KBM-7 (cell line): ENCODE measurements at regions of chr20 and their contacts with region 1.

Region 1: GRCh38 chr20:38658879-38659596 is 57.4 kb downstream of the ARHGAP40 start:
- DNase-seq: peak; percentile 25

Region 2: GRCh38 chr20:38304845-38305447 is 354.1 kb before region 1 on chr20:
- in situ Hi-C with region 1: no loop called
- DNase-seq: peak; percentile 73

Region 3: GRCh38 chr20:38825901-38826625 is 167.0 kb after region 1 on chr20:
- in situ Hi-C with region 1: no loop called
- DNase-seq: peak; percentile 64

Region 4: GRCh38 chr20:38907918-38908677 is 249.1 kb after region 1 on chr20:
- in situ Hi-C with region 1: loop called (anchors 10 kb)
- DNase-seq: no peak